ENCODE measurements at regions of chr10 and their contacts with region 1.

Region 1: GRCh38 chr10:58268870-58269605 is at the start of gene CISD1:
- DNase-seq: peak; percentile 98
- H3K4me3 ChIP-seq: peak within 1 kb of the TSS; percentile 66
- H3K27ac ChIP-seq: peak within 1 kb of the TSS; percentile 86
- H3K4me1 ChIP-seq: peaks cover 27% of the 10 kb centered on the region
- H3K27me3 ChIP-seq: no peaks in the 10 kb centered on the region
- CTCF ChIP-seq: no peak
- total RNA-seq, gene CISD1: 62.5 and 75.3 TPM in 2 replicates

Region 2: GRCh38 chr10:58054881-58055280 is 214.2 kb before region 1 on chr10:
- CTCF ChIA-PET with region 1: no interaction called
- POLR2A ChIA-PET with region 1: no interaction called
- intact Hi-C with region 1: no loop called
- DNase-seq: no peak
- H3K4me3 ChIP-seq: no peak overlapping the region
- H3K27ac ChIP-seq: no peak overlapping the region
- H3K4me1 ChIP-seq: no peaks in the 10 kb centered on the region
- H3K27me3 ChIP-seq: no peaks in the 10 kb centered on the region
- CTCF ChIP-seq: no peak

Region 3: DNA sequence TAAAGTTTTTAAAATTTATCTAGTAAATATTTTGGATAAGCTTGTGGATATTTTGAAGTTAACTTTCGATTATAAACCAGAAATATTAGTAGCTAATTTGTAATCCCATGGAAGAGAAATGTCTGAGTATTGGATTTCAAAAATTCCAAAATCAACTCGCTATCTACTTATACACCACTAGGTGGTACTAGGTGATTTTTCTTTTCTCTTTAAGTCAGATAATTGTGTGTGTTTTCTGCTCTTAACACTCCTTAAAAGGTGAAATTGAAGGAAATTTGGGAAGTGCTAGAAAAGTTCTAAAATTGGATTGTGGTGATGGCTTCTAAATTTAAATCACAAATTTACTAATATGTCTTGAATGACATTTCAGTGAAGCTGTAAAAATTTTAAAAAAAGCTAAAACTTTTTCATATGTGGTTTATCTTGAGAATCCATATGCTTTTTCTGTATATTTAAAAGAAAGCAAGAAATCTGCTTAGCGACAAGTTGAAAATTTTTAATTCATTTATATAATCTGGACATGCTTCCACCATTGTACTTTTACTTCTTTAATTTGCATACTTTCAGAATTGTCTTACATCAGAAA is 91.6 kb before region 1 on chr10:
- CTCF ChIA-PET with region 1: no interaction called
- POLR2A ChIA-PET with region 1: interaction called, 4 read pairs
- intact Hi-C with region 1: loop called (anchors 1 kb)
- DNase-seq: no peak
- H3K4me3 ChIP-seq: no peak overlapping the region
- H3K27ac ChIP-seq: no peak overlapping the region
- H3K4me1 ChIP-seq: no peaks in the 10 kb centered on the region
- H3K27me3 ChIP-seq: no peaks in the 10 kb centered on the region
- CTCF ChIP-seq: peak; percentile 91

Region 4: GRCh38 chr10:58217612-58218011 is 51.4 kb before region 1 on chr10:
- CTCF ChIA-PET with region 1: no interaction called
- POLR2A ChIA-PET with region 1: no interaction called
- intact Hi-C with region 1: loop called (anchors 2 kb)
- DNase-seq: peak in 1 of 2 experiments; percentile 64
- H3K4me3 ChIP-seq: no peak overlapping the region
- H3K27ac ChIP-seq: peak overlapping the region; percentile 6; the same call in 1 of the 2 replicates
- H3K4me1 ChIP-seq: peaks cover 6% of the 10 kb centered on the region
- H3K27me3 ChIP-seq: no peaks in the 10 kb centered on the region
- CTCF ChIP-seq: no peak

Region 5: GRCh38 chr10:58280982-58281752 is 12.1 kb after region 1 on chr10:
- CTCF ChIA-PET with region 1: no interaction called
- POLR2A ChIA-PET with region 1: interaction called, 3 read pairs
- intact Hi-C with region 1: loop called (anchors 1 kb)
- DNase-seq: peak in 1 of 2 experiments; percentile 49
- H3K4me3 ChIP-seq: no peak overlapping the region
- H3K27ac ChIP-seq: peak overlapping the region; percentile 53
- H3K4me1 ChIP-seq: peaks cover 27% of the 10 kb centered on the region
- H3K27me3 ChIP-seq: no peaks in the 10 kb centered on the region
- CTCF ChIP-seq: no peak

Region 6: DNA sequence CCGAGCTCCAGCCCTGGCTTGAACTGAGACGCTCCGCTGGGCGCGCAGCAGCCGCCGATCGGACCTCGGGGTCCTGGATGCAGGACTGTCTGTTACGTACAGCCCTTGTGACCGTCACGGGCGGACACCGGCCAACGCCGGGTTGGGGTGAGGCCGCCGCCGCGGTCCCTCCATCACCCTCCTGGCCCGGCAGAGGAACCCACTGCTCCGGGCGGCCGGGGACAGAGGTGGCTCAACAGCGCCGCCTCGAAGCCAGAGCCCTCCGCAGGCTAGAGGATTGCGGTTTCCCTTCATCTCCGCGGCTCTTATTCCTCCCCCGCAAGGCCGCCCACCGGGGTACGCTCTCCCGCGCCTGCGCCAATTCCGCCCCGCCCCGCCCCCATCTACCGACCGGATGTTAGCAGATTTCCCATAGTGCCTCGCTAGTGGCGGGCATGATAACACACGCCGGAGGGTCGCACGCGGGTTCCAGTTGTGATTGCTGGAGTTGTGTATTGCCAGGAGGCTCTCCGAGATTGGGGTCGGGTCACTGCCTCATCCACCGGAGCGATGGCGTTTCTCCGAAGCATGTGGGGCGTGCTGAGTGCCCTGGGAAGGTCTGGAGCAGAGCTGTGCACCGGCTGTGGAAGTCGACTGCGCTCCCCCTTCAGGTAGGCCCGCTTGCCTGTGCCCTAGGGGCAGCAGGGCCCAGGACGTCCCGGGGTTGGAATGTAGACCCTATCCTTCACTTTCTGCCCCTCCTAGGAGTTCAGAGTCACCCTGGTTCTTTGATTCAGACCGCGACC is 116.2 kb after region 1 on chr10 and contains the start of gene TFAM:
- CTCF ChIA-PET with region 1: no interaction called
- POLR2A ChIA-PET with region 1: no interaction called
- intact Hi-C with region 1: loop called (anchors 1 kb)
- DNase-seq: peak; percentile 76 to 94
- H3K4me3 ChIP-seq: peak within 1 kb of the TSS; percentile 65
- H3K27ac ChIP-seq: peak within 1 kb of the TSS; percentile 55
- H3K4me1 ChIP-seq: peaks cover 23% of the 10 kb centered on the region
- H3K27me3 ChIP-seq: no peaks in the 10 kb centered on the region
- CTCF ChIP-seq: peak; percentile 42; the same call in 1 of the 2 replicates
- total RNA-seq, gene TFAM: 80.6 and 87.1 TPM in 2 replicates

Measured in PC-9 (cell line).